Posterior cingulate gyrus (tissue), 11 donors: ENCODE measurements at regions of chr11 and their contacts with region 1.

Region 1: DNA sequence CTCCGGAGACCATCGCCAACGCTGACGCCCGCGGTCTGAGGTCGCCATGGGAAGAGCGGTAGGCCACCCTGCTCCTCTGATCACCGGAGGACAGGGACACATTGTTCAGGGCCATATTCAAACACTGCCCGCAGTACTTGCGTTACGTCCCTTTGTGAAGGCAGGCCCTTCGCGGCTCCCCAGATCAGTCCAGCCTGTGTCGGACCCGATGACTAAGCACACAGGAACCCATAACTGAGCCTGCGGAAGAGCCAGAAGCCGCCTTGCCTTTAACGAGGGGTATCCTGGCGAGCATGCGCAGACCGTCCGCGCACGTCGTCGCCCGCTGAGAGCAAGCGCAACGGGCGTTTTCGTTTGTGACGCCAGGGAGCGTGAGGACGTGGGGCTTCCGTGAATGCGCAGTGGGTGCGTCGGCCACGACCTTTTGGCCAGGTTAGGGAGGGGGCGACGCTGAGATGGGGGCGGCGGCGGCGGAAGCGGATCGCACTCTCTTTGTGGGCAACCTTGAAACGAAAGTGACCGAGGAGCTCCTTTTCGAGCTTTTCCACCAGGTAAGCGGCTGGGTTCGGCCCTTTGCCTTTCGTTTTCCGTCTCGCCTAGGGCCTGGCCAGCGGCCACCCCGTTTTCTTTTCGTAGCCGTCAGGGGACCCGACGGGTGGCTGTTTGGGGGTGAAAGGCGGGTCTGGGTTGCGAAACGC is at the starts of genes C11orf71 and RBM7:
- DNase-seq: peak; percentile 91 to 99 (median 94)

Region 2: DNA sequence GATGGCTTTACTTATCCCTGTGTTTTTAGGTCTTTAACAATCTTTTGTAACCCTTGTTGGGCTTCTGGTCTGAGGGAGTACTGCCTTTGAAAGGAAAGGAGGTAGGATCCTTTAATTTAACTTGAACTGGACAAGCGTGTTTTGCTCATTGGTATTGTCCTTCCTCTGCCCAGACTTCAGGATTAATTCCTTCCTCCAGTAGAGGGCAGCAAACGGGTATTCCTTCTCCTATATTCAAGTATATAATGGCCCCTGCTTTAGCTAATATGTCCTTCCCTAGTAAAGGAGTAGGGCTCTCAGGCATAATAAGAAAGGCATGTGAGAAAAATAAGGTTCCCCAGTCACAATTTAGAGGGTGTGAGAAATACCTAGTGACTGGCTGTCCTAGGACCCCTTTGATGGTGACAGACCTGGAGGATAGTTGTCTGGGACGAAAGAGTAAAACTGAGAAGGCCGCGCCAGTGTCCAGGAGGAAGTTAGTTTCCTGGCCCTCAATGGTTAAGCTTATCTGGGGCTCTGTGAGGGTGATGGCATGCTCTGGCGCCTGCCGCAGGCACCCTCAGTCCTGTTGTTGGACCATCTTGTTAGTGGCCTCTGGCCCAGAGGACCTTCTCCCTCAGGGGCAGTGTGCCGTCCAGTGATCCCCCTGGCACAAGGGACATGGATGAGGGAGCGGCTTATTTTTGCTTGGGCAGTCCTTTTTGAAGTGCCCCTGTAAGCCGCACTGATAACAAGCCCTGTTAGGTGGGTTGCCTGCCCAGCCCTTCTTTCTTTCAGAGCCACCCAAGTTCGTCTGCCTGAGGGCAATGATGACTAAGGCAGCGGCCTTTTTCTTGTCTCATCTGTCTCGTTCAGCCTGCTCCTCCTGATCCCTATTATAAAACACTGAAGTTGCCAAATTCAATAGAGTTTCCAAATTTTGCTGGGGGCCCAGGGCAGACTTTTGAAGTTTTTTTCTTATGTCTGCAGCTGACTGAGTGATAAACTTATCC is 51.9 kb before region 1 on chr11:
- intact Hi-C with region 1: loop called (anchors 5 kb)
- DNase-seq: peak in 2 of 10 donors; percentile 10 to 30

Region 3: DNA sequence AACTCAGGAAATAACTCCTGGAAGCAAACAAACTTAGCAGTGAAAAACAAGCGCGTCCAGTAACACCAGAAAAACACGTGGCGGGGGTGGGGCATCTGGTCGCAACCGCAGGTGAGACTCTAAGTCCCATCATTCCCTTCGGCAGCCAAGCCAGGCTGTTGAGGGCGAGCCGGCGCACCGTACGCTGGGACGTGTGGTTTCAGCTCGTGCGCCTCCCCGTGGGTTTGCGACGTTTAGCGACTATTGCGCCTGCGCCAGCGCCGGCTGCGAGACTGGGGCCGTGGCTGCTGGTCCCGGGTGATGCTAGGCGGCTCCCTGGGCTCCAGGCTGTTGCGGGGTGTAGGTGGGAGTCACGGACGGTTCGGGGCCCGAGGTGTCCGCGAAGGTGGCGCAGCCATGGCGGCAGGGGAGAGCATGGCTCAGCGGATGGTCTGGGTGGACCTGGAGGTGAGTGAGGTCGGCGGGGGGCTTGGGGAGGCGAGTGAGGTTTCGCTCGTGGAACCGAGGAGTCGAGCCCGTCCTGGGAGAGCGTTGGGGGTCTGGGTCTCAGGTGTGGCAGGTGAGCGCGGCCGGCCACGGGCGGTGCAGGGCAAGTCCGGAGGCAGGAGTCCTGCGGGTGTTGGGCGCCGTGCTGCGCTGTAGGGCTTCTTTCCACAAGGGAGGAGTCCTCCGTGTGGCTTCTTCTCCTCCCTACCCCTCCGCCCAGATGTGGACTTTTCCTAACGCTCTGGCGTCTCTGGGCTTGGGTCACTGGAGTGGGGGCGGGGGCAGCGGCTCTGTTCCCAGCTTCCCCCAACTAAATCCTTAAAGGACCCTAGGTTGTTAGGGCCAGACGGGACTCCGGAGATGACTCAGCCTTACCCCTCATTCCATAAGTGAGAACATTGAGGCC is 39.1 kb after region 1 on chr11 and contains the start of gene REXO2:
- intact Hi-C with region 1: loop called (anchors 1 kb)
- DNase-seq: peak; percentile 92 to 99 (median 95)